ENCODE measurements at regions of chr16 and their contacts with region 1.

Region 1: DNA sequence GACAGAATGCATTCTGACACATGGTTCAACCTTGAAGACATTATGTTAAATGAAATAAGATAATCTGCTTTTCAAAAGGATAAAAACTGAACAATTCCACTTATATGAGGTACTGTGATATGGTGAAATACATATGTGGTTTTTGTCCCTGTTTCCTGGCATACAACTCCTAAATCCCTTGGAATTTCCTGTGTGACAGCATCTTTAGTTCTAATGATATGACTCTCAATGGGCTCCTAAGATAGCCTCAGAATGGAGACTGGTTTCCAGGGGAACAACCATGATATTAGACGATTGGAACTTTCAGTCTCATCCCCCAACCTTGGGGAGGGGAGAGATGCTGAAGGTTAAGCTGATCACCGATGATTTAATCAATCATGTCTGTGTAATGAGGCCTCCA is 37.7 kb upstream of the PHLPP2 start:
- DNase-seq: no peak
- H3K4me3 ChIP-seq: no peak overlapping the region
- H3K27ac ChIP-seq: no peak overlapping the region
- H3K4me1 ChIP-seq: no peaks in the 10 kb centered on the region
- H3K27me3 ChIP-seq: no peaks in the 10 kb centered on the region
- CTCF ChIP-seq: no peak

Region 2: DNA sequence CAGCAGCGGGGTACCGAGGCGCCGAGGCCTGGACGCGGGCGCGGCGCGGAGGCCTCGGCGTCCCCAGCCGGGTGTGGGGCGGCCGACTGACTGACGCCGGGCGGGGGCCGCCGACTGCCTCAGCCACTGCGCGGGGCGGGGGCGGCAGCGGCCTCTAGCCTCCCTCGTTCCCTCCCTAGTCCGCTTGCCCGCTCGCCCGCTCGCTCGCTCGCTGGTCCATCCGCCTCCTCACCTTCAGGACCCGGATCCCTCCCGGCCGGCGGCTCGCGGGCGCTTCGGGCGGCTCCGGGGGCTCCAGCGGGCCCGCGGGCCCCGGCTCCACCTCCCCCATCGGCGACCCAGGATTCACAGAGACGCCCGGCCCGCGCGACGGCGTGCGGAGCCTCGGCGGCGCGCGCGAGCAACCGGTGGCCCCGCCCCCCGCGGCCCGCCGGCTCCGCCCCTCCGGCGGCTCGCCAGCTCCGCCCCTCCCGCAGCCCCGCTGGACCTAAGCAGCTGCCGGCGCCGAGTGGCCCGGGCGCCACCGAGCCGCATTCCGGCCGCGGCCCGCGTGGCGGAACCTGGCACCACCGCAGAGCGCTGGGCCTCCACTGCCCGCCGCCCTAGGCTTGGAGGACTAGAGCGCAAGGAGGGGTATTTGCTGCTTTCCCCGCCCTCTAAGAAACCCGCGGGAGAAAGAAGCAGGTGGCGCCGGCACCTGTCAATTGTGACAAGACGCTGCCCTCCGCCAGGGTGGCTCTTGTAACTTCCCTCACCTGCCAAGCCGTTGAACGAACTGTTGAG is 38.5 kb before region 1 on chr16:
- CTCF ChIA-PET with region 1: no interaction called
- POLR2A ChIA-PET with region 1: interaction called, 12 read pairs
- intact Hi-C with region 1: no loop called
- DNase-seq: peak; percentile 60 to 77
- H3K4me3 ChIP-seq: peak overlapping the region; percentile 74; the same call in 1 of the 2 replicates
- H3K27ac ChIP-seq: no peak overlapping the region
- H3K4me1 ChIP-seq: peaks cover 15% of the 10 kb centered on the region
- H3K27me3 ChIP-seq: no peaks in the 10 kb centered on the region
- CTCF ChIP-seq: no peak